AG04450 (cell line): ENCODE measurements at regions of chr19 and their contacts with region 1.

Region 1: GRCh38 chr19:7868676-7869452 is 5.3 kb downstream of the PRR36 start:
- DNase-seq: no peak
- H3K4me3 ChIP-seq: peak overlapping the region; percentile 50
- H3K27ac ChIP-seq: no peak overlapping the region
- H3K27me3 ChIP-seq: peaks cover 21% of the 10 kb centered on the region
- CTCF ChIP-seq: peak; percentile 43

Region 2: GRCh38 chr19:7888145-7888825 is 19.4 kb after region 1 on chr19 and contains the start of gene LRRC8E:
- CTCF ChIA-PET with region 1: interaction called, 14 read pairs
- POLR2A ChIA-PET with region 1: interaction called, 4 read pairs
- DNase-seq: no peak
- H3K4me3 ChIP-seq: peak within 1 kb of the TSS; percentile 71
- H3K27ac ChIP-seq: no peak within 1 kb of the TSS
- H3K27me3 ChIP-seq: peaks cover 2% of the 10 kb centered on the region
- CTCF ChIP-seq: no peak
- polyA plus RNA-seq, gene LRRC8E: 4.1 and 4.7 TPM in 2 replicates